ENCODE measurements at regions of chr21 and their contacts with region 1.

Region 1: DNA sequence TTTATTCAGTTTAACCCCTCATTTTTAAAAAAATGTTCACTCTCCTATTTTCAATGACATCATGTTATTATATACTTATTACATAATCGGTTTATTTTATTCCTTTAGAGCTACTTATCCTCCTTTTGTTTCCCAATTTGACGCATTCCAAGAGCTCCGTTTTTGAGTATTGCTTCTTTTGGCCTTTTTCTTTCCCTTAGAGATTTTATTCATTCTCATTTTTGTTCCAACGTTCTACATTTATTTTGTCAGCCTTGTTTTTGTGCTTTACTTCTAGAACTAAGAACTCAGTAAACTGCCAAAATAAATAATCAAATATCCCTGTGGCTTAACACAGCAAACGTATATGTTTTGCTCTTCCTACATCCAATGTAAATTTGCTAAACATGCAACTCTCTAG is 769.1 kb downstream of the NCAM2 start:
- DNase-seq: no peak
- H3K4me3 ChIP-seq: no peak overlapping the region
- H3K27ac ChIP-seq: no peak overlapping the region
- H3K4me1 ChIP-seq: no peaks in the 10 kb centered on the region
- H3K27me3 ChIP-seq: no peaks in the 10 kb centered on the region
- CTCF ChIP-seq: no peak

Region 2: DNA sequence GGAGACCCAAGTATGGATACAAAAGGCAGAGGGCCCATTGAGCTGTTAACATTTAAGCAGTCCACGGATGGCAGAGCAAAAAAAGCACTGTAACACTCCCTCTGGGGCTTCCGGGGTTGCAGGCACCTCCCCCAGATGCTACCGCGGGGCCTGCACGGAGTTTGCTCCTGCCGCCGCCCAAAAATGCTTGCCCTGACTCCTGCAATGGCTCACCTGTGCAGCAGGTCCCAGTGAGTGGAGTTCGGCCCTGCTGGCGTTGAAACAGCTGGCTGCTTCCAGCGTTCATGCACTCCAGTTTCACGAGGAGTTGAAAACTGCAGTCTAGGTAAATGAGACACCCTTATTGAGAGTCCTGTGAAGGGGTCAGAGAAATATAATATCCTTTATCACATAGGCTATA is 63.8 kb after region 1 on chr21:
- intact Hi-C with region 1: no loop called
- DNase-seq: no peak
- H3K4me3 ChIP-seq: no peak overlapping the region
- H3K27ac ChIP-seq: no peak overlapping the region
- H3K4me1 ChIP-seq: no peaks in the 10 kb centered on the region
- H3K27me3 ChIP-seq: no peaks in the 10 kb centered on the region
- CTCF ChIP-seq: no peak

Region 3: DNA sequence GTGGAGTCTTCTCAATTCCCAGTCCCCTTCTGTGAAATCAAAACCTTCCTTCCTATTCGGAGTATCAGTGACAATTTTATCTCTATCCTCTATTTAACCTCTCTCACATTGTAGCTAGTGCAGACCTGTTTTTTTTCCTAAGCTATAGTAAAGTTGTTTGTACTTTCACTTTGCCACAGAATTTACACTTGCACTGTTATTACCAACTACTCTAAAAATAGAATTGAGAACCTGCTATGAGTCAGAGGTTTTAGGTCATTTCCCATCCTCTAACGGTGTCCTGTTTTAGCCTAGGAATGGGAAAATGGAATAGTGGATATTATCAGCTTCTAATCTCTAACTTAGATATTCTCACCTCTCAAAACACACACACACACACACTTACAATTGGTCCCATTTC is 93.6 kb after region 1 on chr21:
- intact Hi-C with region 1: loop called (anchors 10 kb)
- DNase-seq: no peak
- H3K4me3 ChIP-seq: no peak overlapping the region
- H3K27ac ChIP-seq: no peak overlapping the region
- H3K4me1 ChIP-seq: no peaks in the 10 kb centered on the region
- H3K27me3 ChIP-seq: no peaks in the 10 kb centered on the region
- CTCF ChIP-seq: no peak